ENCODE measurements at regions of chr2 and their contacts with region 1.

Region 1: DNA sequence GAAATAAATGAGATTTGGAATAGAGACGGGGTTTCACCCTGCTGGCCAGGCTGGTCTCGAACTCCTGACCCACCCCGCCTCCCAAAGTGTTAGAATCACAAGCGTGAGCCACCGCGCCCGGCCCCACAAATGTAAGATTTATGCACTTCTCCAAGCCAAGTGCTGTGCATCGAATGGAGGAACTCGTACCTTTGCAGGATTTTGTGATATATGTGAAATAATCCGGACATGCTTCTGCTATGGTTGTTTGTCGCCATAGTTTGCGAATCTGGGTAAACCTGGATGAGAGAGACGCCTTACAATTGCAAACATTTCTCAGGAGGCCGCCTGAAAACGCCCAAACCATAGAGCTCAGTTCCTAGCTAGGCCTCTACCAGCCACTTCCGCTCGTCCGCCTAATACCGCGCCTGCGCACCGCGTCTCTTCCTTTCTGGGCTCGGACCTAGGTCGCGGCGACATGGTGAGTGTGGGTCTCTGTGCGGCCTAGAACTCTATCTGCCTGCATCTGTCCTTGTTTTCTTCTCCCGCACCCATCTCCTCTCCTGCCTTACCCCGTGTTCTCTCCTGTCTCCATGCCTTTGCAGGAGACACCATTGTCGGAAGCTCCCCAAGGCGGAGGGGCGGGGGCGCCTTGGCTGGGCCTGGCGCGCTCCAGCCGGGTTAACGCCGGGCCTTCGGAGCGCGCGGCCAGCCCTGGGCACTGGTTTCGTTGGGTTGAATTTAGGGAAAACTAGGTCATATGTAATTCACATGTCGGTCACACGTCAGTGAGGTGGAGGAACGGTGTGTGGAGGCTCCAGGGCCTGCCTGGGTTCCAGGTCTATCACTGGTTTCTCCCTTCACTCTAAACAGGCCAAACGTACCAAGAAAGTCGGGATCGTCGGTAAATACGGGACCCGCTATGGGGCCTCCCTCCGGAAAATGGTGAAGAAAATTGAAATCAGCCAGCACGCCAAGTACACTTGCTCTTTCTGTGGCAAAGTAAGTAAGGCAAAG is at the start of gene RPL37A:
- DNase-seq: peak; percentile 97
- H3K4me3 Mint-ChIP-seq: peak within 1 kb of the TSS; percentile 97
- H3K27ac Mint-ChIP-seq: peak within 1 kb of the TSS; percentile 99
- H3K4me1 Mint-ChIP-seq: peaks cover 28% of the 10 kb centered on the region
- H3K27me3 Mint-ChIP-seq: no peaks in the 10 kb centered on the region
- CTCF ChIP-seq: no peak
- total RNA-seq, gene RPL37A: 4,349 and 4,745 TPM in 2 replicates

Region 2: GRCh38 chr2:216108967-216109921 is 389.5 kb before region 1 on chr2 and contains the start of gene XRCC5:
- CTCF ChIA-PET with region 1: interaction called, 6 read pairs
- POLR2A ChIA-PET with region 1: interaction called, 17 read pairs
- intact Hi-C with region 1: loop called (anchors 10 kb)
- DNase-seq: peak; percentile 95
- H3K4me3 Mint-ChIP-seq: peak within 1 kb of the TSS; percentile 100
- H3K27ac Mint-ChIP-seq: peak within 1 kb of the TSS; percentile 100
- H3K4me1 Mint-ChIP-seq: peaks cover 24% of the 10 kb centered on the region
- H3K27me3 Mint-ChIP-seq: no peaks in the 10 kb centered on the region
- CTCF ChIP-seq: no peak
- total RNA-seq, gene XRCC5: 159 and 198 TPM in 2 replicates

Region 3: DNA sequence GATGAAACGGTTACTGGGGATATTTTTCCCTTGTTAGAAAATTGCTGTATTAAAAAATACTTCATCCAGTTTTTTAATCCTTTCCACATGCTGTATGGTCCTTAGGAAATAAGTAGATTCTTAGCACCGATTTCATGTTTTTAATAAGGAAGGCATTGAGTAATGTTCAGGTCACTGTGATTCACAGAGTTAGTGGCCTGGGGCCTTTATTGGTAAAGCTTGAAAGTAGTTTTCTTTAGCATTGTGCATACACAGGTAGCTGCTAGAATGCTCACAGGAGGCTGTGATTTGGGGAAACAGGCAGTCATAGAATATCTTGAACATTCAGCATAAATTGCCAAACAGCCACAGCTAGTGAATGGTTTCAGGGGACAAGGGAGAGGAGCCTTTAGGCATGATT is 309.8 kb before region 1 on chr2:
- CTCF ChIA-PET with region 1: interaction called, 3 read pairs
- POLR2A ChIA-PET with region 1: interaction called, 10 read pairs
- intact Hi-C with region 1: no loop called
- DNase-seq: peak; percentile 80
- H3K4me3 Mint-ChIP-seq: no peak overlapping the region
- H3K27ac Mint-ChIP-seq: peak overlapping the region; percentile 54
- H3K4me1 Mint-ChIP-seq: peaks cover 39% of the 10 kb centered on the region
- H3K27me3 Mint-ChIP-seq: no peaks in the 10 kb centered on the region
- CTCF ChIP-seq: no peak

Region 4: DNA sequence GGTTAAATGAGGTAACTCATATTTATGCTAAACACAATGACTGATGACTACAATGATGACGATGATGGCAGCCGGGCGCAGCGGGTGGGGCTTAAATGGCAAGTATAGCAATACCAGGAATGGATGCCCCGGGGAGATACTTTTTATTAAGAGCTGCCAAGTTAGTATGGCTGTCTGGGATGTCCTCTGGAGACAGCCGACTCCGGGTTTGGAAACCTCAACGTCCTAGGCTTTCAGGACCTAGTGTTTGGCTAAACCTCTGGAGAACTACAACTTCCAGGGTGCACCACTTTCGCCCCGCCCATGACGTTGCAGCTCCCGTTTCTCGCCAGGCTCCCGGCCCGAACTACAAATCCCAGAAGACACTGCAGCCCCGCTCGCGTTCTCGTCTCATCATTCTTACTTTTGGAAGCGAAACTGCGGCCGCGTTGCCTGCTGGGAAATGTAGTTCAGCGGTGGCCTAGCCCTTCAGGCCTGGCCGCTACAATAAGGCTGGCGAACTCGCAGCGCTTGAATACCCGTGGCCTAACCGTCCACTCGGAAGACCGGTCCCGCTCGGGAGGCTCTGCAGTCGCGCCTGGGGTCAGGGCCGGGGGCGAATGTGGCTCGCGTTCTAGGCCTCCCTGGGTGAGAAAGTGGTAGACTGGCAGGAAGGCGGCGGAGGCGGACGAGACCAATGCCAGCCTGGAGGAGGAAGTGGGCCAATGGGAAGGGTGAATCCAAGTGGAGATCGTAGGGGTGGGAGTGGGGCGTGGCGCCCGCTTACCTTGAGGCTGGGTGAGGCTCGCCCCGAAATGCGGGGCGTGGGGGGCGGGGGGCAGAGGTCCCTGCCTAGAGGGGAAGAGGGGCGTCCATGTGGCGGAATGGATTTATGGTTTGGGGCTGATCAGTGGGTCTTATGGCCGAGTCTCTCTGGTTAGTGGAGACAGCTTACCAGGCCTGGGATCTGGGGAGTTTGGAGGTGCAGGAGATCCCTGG is 86.4 kb before region 1 on chr2 and contains the start of gene SMARCAL1:
- CTCF ChIA-PET with region 1: no interaction called
- POLR2A ChIA-PET with region 1: interaction called, 8 read pairs
- intact Hi-C with region 1: loop called (anchors 10 kb)
- DNase-seq: peak; percentile 98
- H3K4me3 Mint-ChIP-seq: peak within 1 kb of the TSS; percentile 98
- H3K27ac Mint-ChIP-seq: peak within 1 kb of the TSS; percentile 91
- H3K4me1 Mint-ChIP-seq: no peaks in the 10 kb centered on the region
- H3K27me3 Mint-ChIP-seq: peaks cover 8% of the 10 kb centered on the region
- CTCF ChIP-seq: no peak
- total RNA-seq, gene SMARCAL1: 22.1 and 24.0 TPM in 2 replicates

Region 5: DNA sequence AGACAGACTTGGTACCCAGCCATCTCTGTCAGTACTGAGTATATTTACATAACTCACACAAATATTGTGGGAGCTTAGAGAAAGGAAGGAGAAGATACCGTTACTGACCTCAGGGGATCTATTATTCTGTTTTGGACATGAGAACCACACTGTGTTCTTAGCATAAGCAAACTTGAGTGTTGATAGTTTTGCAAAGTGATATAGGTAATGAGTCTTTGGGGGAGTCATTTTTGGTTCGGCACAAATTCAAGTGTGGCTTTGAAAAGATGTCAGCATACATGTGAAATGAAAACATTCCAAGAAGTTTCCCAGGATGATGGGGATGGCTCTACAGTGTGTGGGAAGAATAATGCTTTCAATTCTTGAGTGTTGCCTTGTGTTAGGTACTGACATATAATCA is 62.3 kb before region 1 on chr2:
- CTCF ChIA-PET with region 1: no interaction called
- POLR2A ChIA-PET with region 1: no interaction called
- intact Hi-C with region 1: no loop called
- DNase-seq: no peak
- H3K4me3 Mint-ChIP-seq: no peak overlapping the region
- H3K27ac Mint-ChIP-seq: no peak overlapping the region
- H3K4me1 Mint-ChIP-seq: no peaks in the 10 kb centered on the region
- H3K27me3 Mint-ChIP-seq: no peaks in the 10 kb centered on the region
- CTCF ChIP-seq: no peak

Region 6: DNA sequence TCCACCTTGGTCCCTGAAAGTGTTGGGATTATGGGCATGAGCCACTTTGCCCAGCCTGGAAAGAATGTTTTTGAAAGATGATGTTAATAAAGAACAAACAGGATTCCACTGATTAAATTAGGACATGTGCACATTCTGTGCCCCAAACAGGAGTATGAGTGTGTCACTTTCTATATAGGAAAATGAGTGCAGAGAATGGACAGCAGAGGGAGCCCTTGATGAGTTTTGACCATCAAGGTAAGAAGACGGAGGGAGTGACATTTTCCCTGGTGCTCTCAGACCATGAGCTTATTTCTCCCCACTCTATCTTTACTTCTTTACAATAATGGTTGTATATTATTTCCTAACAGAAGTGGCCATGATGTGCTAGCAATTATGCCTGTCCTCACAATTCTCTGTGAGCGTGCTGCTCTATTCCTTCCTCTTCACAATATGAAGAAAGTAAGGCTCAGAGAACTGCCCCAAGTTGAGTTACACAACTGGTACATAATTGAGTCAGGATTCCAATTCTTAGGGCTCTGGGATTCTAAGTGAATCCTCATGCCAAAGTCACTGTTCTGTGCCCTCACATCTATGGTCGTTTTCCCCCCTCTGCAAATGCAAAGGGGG is 20.5 kb after region 1 on chr2:
- CTCF ChIA-PET with region 1: interaction called, 14 read pairs
- POLR2A ChIA-PET with region 1: interaction called, 3 read pairs
- intact Hi-C with region 1: no loop called
- DNase-seq: peak; percentile 82
- H3K4me3 Mint-ChIP-seq: no peak overlapping the region
- H3K27ac Mint-ChIP-seq: no peak overlapping the region
- H3K4me1 Mint-ChIP-seq: peaks cover 6% of the 10 kb centered on the region
- H3K27me3 Mint-ChIP-seq: no peaks in the 10 kb centered on the region
- CTCF ChIP-seq: peak; percentile 62

Region 7: GRCh38 chr2:216578325-216578724 is 79.6 kb after region 1 on chr2:
- CTCF ChIA-PET with region 1: no interaction called
- POLR2A ChIA-PET with region 1: no interaction called
- intact Hi-C with region 1: no loop called
- DNase-seq: no peak
- H3K4me3 Mint-ChIP-seq: no peak overlapping the region
- H3K27ac Mint-ChIP-seq: no peak overlapping the region
- H3K4me1 Mint-ChIP-seq: no peaks in the 10 kb centered on the region
- H3K27me3 Mint-ChIP-seq: peaks cover 28% of the 10 kb centered on the region
- CTCF ChIP-seq: no peak

Region 8: DNA sequence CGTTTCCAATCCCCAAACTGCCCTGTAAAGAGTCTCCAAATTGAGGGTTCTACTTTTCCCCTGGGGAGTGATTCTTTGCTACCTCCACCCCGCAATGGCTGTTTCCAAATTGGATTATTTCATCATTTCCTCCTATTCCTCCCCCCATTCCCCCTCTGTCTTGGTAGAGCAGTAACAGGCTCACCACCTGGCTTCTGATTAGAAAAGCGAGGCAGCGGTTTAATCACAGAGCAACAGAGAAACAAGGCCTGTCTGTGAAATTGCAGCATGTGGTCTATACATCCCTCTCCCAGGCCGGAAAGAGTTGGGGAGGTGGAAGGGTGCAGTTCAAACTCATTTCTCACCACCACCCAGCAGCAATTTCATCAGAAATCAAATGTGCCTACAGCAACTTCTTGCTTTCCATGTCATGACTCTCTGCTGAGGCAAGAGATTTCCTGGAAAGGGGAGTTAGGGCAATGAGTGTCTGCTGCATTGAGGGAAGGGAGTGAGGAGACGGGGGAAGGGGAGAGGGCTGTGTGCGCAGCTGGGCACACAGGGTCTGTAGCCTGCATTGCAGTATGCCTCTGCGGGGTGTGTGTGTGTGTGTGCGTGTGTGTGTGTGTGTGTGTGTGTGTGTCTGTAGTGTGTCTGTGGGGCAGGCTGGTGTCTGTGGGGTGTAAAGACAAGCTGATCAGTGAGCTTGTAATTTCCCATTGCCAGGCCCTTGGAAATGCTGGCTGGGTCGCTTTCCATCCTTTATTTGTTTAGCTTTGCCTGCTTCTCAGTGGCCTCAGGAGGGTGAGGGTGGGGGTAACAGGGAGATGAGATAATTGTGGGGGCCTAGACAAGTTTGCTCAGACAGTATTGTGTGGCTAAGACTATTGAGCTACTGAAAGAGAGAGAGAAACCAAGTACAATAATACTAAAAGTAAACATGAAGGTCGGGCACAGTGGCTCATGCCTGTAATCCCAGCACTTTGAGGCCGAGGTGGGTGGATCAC is 121.0 kb after region 1 on chr2:
- CTCF ChIA-PET with region 1: no interaction called
- POLR2A ChIA-PET with region 1: no interaction called
- intact Hi-C with region 1: no loop called
- DNase-seq: peak; percentile 48
- H3K4me3 Mint-ChIP-seq: no peak overlapping the region
- H3K27ac Mint-ChIP-seq: no peak overlapping the region
- H3K4me1 Mint-ChIP-seq: peaks cover 10% of the 10 kb centered on the region
- H3K27me3 Mint-ChIP-seq: no peaks in the 10 kb centered on the region
- CTCF ChIP-seq: no peak

Region 9: GRCh38 chr2:217256251-217256650 is 757.5 kb after region 1 on chr2:
- CTCF ChIA-PET with region 1: no interaction called
- POLR2A ChIA-PET with region 1: no interaction called
- intact Hi-C with region 1: no loop called
- DNase-seq: no peak
- H3K4me3 Mint-ChIP-seq: no peak overlapping the region
- H3K27ac Mint-ChIP-seq: no peak overlapping the region
- H3K4me1 Mint-ChIP-seq: no peaks in the 10 kb centered on the region
- H3K27me3 Mint-ChIP-seq: no peaks in the 10 kb centered on the region
- CTCF ChIP-seq: no peak

Measured in MCF 10A (cell line).